Naive thymus-derived CD4-positive, alpha-beta T cell (primary cell): ENCODE measurements at regions of chr7 and their contacts with region 1.

Region 1: DNA sequence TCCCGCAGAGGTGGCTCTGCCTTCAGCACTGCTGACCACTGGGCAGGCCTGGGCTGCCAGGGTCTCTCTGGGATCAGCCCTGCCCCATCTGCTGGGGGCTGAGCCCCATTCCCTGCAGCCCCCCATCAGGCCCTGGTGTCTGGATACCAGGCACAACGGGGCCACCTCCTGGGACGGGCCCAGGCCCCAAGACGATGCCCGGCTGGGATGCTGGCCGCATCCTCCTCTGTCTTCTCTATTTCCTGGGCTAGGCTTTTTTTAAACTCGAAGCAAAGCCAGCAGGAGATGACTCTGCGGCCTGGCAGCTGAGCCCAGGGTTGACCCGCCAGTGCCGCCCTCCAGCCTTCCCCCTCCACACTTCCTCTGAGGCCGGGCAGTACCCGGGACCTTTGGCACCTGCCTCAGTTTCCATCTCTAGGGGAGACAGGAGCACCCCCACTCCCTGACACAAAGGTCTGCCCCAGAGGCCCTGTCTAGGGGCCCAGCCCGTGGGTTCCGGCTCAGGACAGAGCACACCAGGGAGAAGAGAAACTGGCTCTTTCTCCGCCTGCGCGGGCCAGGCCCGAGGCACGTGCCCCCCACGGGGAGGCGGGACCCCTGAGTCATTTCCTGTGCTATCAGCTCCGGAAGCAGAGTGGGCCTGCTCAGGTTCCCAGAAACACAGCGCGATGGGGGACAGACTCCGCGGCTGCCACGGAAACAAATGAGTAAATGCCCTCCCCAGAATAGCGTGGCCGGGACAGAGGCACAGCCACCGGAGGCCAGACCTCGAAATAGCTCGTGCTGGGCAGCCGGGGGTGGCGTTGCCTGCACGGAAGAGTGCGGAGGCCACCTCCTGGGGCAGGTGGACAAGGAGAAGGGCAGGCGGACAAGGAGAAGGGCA is 84.6 kb upstream of the PDGFA start:
- DNase-seq: peak; percentile 74 to 91 (median 87)
- ATAC-seq: peak; percentile 89
- H3K4me3 ChIP-seq: peak overlapping the region; percentile 26
- H3K4me3 Mint-ChIP-seq: peak overlapping the region; percentile 77 to 98 (median 88)
- H3K27ac ChIP-seq: peak overlapping the region; percentile 86
- H3K27ac Mint-ChIP-seq: peak overlapping the region; percentile 93 to 100 (median 99)
- H3K4me1 ChIP-seq: peaks cover 48 to 56% of the 10 kb centered on the region in 2 donors
- H3K4me1 Mint-ChIP-seq: peaks cover 37 to 72% (median 49%) of the 10 kb centered on the region in 7 donors
- H3K27me3 ChIP-seq: no peaks in the 10 kb centered on the region
- H3K27me3 Mint-ChIP-seq: no peaks in the 10 kb centered on the region

Region 2: DNA sequence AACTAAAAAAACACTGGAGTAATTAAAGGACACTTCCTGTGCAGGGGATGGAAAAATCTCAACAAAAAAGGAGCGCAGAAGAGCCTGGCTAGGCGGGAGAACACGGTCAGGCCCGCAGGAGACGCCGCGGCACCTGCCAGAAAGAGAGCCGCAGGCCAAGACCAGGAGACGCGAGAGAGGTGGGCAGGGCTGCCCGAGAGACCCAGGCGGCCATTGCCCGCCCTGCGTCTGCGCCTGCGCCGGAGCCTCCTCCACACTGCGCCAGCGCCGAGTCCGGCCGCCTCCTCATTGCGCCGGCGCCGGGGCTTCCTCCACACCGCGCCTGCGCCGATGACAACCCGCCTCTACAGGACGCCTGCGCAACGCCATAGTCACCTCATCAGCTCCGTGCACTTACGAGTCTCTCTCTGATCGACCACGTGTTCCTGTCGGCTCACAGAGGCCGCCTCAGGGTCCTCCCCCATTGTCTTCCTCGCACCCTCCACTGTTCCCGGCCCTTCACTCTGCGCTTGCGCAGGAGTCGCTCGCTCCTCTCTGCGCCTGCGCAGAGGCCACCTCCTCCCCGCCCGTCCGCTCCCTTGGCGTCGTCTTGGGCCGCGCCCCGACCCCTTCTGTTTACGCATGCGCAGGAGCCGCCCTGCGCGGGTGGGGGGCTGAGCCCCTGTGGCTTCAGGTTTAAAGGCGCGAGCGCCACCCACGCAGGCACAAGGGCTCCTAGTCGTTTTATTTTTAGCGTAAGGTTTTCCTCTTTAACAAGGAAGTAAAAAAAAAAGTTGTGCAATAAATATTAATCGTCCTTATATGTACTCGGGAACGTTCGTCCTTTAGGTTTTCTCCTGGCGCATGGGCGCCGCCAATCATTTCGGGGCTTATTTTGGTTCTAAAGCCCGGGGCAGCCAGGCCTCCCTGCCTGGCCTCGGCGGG is 455.0 kb before region 1 on chr7:
- CTCF ChIA-PET with region 1: no interaction called
- POLR2A ChIA-PET with region 1: no interaction called
- intact Hi-C with region 1: loop called in 1 of 2 experiments (anchors 5 kb)
- DNase-seq: peak; percentile 97 to 99 (median 99)
- ATAC-seq: peak; percentile 97
- H3K4me3 ChIP-seq: peak overlapping the region; percentile 52
- H3K4me3 Mint-ChIP-seq: peak overlapping the region; percentile 80 to 97 (median 91)
- H3K27ac ChIP-seq: peak overlapping the region; percentile 82
- H3K27ac Mint-ChIP-seq: peak overlapping the region; percentile 94 to 100 (median 99)
- H3K4me1 ChIP-seq: peaks cover 18 to 19% of the 10 kb centered on the region in 2 donors
- H3K4me1 Mint-ChIP-seq: peaks cover 9 to 25% (median 20%) of the 10 kb centered on the region in 7 donors
- H3K27me3 ChIP-seq: no peaks in the 10 kb centered on the region
- H3K27me3 Mint-ChIP-seq: peaks cover 0 to 4% (median 0%) of the 10 kb centered on the region in 5 donors

Region 3: DNA sequence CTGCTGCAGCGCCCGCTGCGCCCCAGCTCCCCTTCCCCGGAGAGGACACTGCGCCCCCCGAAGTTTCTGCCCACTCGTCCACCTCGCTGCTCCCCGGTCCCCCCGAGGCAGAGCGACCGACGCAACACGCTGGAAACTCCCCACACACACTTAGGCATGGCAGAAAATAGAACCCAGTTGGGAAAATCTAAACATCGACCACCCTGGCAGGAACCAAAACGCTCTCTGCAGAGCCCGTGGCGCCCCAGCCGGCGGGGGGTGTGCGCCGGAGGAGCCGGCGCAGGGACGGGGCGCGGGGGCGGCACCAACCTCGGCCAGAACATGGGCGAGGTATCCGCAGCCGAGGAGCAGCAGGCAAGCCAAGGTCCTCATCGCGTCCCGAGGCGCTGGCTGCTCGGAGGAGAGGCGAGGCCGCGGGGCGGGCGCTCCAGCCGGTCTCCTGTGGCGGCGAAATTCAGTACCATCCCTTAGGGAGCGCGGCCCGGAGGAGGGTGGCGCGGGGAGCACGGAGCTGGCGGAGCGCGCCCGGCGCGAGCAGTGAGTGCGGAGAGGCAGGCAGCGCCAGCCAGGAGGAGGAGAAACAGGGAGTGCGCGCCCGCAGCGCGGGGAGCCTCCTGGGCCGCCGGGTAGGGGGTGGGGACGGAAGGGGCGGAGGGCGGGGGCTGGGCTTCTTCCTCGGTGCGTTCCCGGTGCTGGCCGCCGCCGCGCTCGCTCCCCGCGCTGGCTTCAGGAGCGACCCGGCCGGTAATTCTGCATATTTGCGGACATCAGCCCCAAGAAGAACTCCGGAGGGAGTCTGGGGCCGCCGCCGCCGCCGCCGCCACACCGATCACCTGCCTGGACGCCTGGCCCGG is 85.4 kb before region 1 on chr7:
- CTCF ChIA-PET with region 1: no interaction called
- POLR2A ChIA-PET with region 1: no interaction called
- intact Hi-C with region 1: loop called in 1 of 2 experiments (anchors 5 kb)
- DNase-seq: peak in 4 of 9 donors; percentile 17 to 66 (median 24)
- ATAC-seq: peak; percentile 18
- H3K4me3 ChIP-seq: peak overlapping the region; percentile 52
- H3K4me3 Mint-ChIP-seq: peak overlapping the region; percentile 59 to 89 (median 80)
- H3K27ac ChIP-seq: no peak overlapping the region
- H3K27ac Mint-ChIP-seq: peak overlapping the region in 2 of 9 donors; percentile 39 to 43
- H3K4me1 ChIP-seq: peaks cover 0 to 30% of the 10 kb centered on the region in 2 donors
- H3K4me1 Mint-ChIP-seq: peaks cover 0 to 21% (median 15%) of the 10 kb centered on the region in 7 donors
- H3K27me3 ChIP-seq: peaks cover 0 to 20% of the 10 kb centered on the region in 2 donors
- H3K27me3 Mint-ChIP-seq: peaks cover 22 to 47% (median 24%) of the 10 kb centered on the region in 5 donors

Region 4: GRCh38 chr7:668139-668931 is 64.1 kb after region 1 on chr7:
- CTCF ChIA-PET with region 1: no interaction called
- POLR2A ChIA-PET with region 1: interaction called, 6 read pairs
- intact Hi-C with region 1: loop called in 1 of 2 experiments (anchors 5 kb)
- DNase-seq: peak in 6 of 9 donors; percentile 13 to 38 (median 32)
- ATAC-seq: no peak
- H3K4me3 ChIP-seq: peak overlapping the region; percentile 28
- H3K4me3 Mint-ChIP-seq: peak overlapping the region in 1 of 10 donors; percentile 6
- H3K27ac ChIP-seq: peak overlapping the region; percentile 61
- H3K27ac Mint-ChIP-seq: no peak overlapping the region
- H3K4me1 ChIP-seq: peaks cover 0 to 9% of the 10 kb centered on the region in 2 donors
- H3K4me1 Mint-ChIP-seq: peaks cover 0 to 6% (median 0%) of the 10 kb centered on the region in 7 donors
- H3K27me3 ChIP-seq: no peaks in the 10 kb centered on the region
- H3K27me3 Mint-ChIP-seq: no peaks in the 10 kb centered on the region

Region 5: GRCh38 chr7:831596-832166 is 227.4 kb after region 1 on chr7:
- CTCF ChIA-PET with region 1: no interaction called
- POLR2A ChIA-PET with region 1: no interaction called
- intact Hi-C with region 1: loop called (anchors 5 to 10 kb)
- DNase-seq: peak in 3 of 9 donors; percentile 19 to 49 (median 26)
- ATAC-seq: peak; percentile 13
- H3K4me3 ChIP-seq: peak overlapping the region; percentile 12
- H3K4me3 Mint-ChIP-seq: peak overlapping the region; percentile 64 to 89 (median 84)
- H3K27ac ChIP-seq: peak overlapping the region; percentile 83
- H3K27ac Mint-ChIP-seq: peak overlapping the region; percentile 86 to 98 (median 94)
- H3K4me1 ChIP-seq: peaks cover 23 to 36% of the 10 kb centered on the region in 2 donors
- H3K4me1 Mint-ChIP-seq: peaks cover 38 to 67% (median 57%) of the 10 kb centered on the region in 7 donors
- H3K27me3 ChIP-seq: no peaks in the 10 kb centered on the region
- H3K27me3 Mint-ChIP-seq: no peaks in the 10 kb centered on the region